ENCODE measurements at regions of chrX and their contacts with region 1.

Region 1: GRCh38 chrX:136658151-136658550 is 10.2 kb downstream of the CD40LG start:
- DNase-seq: no peak
- H3K4me3 Mint-ChIP-seq: peak overlapping the region; percentile 96
- H3K27ac Mint-ChIP-seq: peak overlapping the region; percentile 91
- H3K4me1 Mint-ChIP-seq: peaks cover 96% of the 10 kb centered on the region
- H3K27me3 Mint-ChIP-seq: no peaks in the 10 kb centered on the region

Region 2: GRCh38 chrX:136431625-136432024 is 226.5 kb before region 1 on chrX:
- CTCF ChIA-PET with region 1: no interaction called
- POLR2A ChIA-PET with region 1: no interaction called
- DNase-seq: no peak
- H3K4me3 Mint-ChIP-seq: no peak overlapping the region
- H3K27ac Mint-ChIP-seq: no peak overlapping the region
- H3K4me1 Mint-ChIP-seq: peaks cover 17% of the 10 kb centered on the region
- H3K27me3 Mint-ChIP-seq: no peaks in the 10 kb centered on the region

Region 3: DNA sequence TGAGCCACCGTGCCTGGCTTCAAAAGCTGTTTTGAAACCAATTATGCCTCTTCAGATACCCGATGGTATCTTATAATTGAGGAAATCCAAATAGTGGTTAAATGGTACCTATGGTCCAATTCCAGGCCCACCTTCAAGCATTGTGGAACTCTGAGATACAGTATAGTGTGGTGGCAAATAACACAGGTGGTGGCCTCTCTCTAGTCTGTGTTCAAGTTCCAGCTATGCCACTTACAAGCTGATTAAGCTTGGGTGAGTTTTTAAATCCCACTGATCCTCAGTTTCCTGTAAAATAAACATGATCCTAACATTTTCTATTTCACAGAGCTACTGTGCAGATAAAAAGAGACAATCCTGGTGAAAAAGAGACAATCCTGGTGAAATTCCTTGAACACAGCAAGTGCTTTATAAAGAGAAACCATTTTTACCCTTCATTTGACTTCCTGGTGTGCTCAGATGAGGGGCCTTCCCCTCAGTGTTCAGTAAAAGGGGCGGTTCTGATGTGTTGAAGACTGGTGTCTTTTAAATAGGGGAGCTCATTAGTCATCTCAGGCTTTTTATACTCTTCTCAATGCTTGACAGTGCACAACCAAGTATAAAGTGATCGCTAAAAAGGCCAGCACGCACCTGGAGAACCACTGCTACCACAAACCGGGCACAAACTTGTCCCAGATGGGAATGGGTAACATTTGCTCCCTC is 41.0 kb before region 1 on chrX:
- CTCF ChIA-PET with region 1: interaction called, 4 read pairs
- POLR2A ChIA-PET with region 1: interaction called, 22 read pairs
- DNase-seq: peak; percentile 35
- H3K4me3 Mint-ChIP-seq: peak overlapping the region; percentile 32
- H3K27ac Mint-ChIP-seq: peak overlapping the region; percentile 87
- H3K4me1 Mint-ChIP-seq: peaks cover 66% of the 10 kb centered on the region
- H3K27me3 Mint-ChIP-seq: no peaks in the 10 kb centered on the region

Region 4: GRCh38 chrX:136646602-136647239 is 11.4 kb before region 1 on chrX:
- CTCF ChIA-PET with region 1: interaction called, 5 read pairs
- POLR2A ChIA-PET with region 1: interaction called, 50 read pairs
- DNase-seq: peak; percentile 61
- H3K4me3 Mint-ChIP-seq: peak overlapping the region; percentile 96
- H3K27ac Mint-ChIP-seq: peak overlapping the region; percentile 91
- H3K4me1 Mint-ChIP-seq: peaks cover 57% of the 10 kb centered on the region
- H3K27me3 Mint-ChIP-seq: no peaks in the 10 kb centered on the region

Region 5: GRCh38 chrX:136694431-136695087 is 36.4 kb after region 1 on chrX:
- CTCF ChIA-PET with region 1: interaction called, 3 read pairs
- POLR2A ChIA-PET with region 1: interaction called, 22 read pairs
- DNase-seq: peak; percentile 28
- H3K4me3 Mint-ChIP-seq: peak overlapping the region; percentile 71
- H3K27ac Mint-ChIP-seq: peak overlapping the region; percentile 98
- H3K4me1 Mint-ChIP-seq: peaks cover 82% of the 10 kb centered on the region
- H3K27me3 Mint-ChIP-seq: no peaks in the 10 kb centered on the region